Activated CD8-positive, alpha-beta T cell treated with anti-CD3 and anti-CD28 coated beads for 36 hours (primary cell): ENCODE measurements at regions of chr3 and their contacts with region 1.

Region 1: GRCh38 chr3:46488735-46489361 is 8.9 kb upstream of the RTP3 start:
- DNase-seq: peak; percentile 97
- ATAC-seq: peak; percentile 99
- H3K4me3 Mint-ChIP-seq: peak overlapping the region; percentile 26
- H3K27ac Mint-ChIP-seq: no peak overlapping the region
- H3K4me1 Mint-ChIP-seq: peaks cover 8% of the 10 kb centered on the region
- H3K27me3 Mint-ChIP-seq: no peaks in the 10 kb centered on the region
- CTCF ChIP-seq: peak; percentile 100

Region 2: DNA sequence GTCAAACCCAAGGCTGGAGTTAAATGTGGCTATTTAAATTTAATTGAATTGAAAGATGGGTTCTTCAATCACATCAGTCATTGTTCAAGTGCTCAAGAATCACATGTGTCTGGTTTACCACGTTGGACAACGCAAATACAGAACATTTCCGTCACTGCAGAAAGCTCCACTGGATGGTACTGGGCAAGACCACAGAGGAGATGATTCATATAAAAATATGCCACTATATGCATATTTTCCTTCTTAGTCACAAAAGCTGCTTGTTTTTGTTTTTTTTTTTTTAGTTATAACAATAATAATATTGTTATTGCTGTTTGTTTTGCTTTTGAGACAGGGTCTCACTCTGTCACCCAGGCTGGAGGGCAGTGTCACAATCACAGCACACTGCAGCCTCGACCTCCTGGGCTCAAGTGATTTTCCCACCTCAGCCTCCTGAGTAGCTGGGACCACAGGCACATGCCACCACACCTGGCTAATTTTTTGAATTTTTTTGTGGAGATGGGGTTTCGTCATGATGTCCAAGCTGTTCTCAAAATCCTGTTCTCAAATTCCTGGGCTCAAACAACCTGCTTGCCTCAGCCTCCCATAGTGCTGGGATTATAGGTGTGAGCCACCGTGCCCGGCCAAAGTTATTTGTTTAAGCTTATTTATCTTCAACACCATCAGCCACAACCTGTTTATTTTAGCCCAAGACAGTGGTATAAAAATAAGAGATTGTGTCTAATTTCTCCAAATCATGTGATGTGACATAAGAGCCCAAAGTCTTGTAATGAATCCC is 28.4 kb after region 1 on chr3:
- CTCF ChIA-PET with region 1: interaction called, 24 read pairs
- POLR2A ChIA-PET with region 1: no interaction called
- intact Hi-C with region 1: no loop called
- DNase-seq: no peak
- ATAC-seq: peak; percentile 58
- H3K4me3 Mint-ChIP-seq: no peak overlapping the region
- H3K27ac Mint-ChIP-seq: no peak overlapping the region
- H3K4me1 Mint-ChIP-seq: no peaks in the 10 kb centered on the region
- H3K27me3 Mint-ChIP-seq: no peaks in the 10 kb centered on the region
- CTCF ChIP-seq: no peak

Region 3: GRCh38 chr3:46558184-46559043 is 69.6 kb after region 1 on chr3:
- CTCF ChIA-PET with region 1: interaction called, 150 read pairs
- POLR2A ChIA-PET with region 1: interaction called, 4 read pairs
- intact Hi-C with region 1: loop called (anchors 5 kb)
- DNase-seq: peak; percentile 79
- ATAC-seq: peak; percentile 94
- H3K4me3 Mint-ChIP-seq: peak overlapping the region; percentile 63
- H3K27ac Mint-ChIP-seq: no peak overlapping the region
- H3K4me1 Mint-ChIP-seq: peaks cover 13% of the 10 kb centered on the region
- H3K27me3 Mint-ChIP-seq: peaks cover 2% of the 10 kb centered on the region
- CTCF ChIP-seq: peak; percentile 69

Region 4: DNA sequence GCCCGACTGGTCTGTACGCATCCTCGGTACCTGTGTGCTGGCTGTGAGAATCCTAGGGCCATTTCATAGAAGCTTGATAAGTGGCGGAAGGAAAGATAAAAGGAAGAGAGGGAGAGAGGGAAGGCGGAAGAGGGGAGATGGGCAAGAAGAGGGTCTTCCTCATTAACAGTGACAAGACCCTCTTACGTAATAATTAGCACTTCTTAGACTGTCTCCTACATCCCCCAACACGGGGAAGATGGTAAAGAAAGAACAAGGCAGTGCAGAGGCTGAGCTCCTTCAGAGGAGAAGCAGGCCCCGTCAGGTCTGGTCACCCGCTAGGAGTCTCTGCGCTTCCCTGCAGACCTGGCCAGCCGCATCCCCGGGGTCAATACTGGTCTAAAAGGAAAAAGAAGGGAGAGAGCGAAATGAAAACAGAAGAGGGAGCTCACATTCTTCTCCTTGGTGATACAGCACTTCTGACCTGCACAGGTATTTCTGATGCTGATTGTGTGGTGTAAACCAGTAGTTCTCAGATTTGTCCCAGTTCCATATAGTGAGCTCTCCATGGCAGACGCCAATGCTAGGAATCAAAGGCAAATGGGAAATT is 104.5 kb after region 1 on chr3:
- CTCF ChIA-PET with region 1: interaction called, 10 read pairs
- POLR2A ChIA-PET with region 1: no interaction called
- intact Hi-C with region 1: no loop called
- DNase-seq: no peak
- ATAC-seq: no peak
- H3K4me3 Mint-ChIP-seq: no peak overlapping the region
- H3K27ac Mint-ChIP-seq: no peak overlapping the region
- H3K4me1 Mint-ChIP-seq: peaks cover 2% of the 10 kb centered on the region
- H3K27me3 Mint-ChIP-seq: peaks cover 1% of the 10 kb centered on the region
- CTCF ChIP-seq: no peak

Region 5: GRCh38 chr3:46619845-46620778 is 131.3 kb after region 1 on chr3:
- CTCF ChIA-PET with region 1: interaction called, 254 read pairs
- POLR2A ChIA-PET with region 1: no interaction called
- intact Hi-C with region 1: no loop called
- DNase-seq: no peak
- ATAC-seq: no peak
- H3K4me3 Mint-ChIP-seq: no peak overlapping the region
- H3K27ac Mint-ChIP-seq: no peak overlapping the region
- H3K4me1 Mint-ChIP-seq: no peaks in the 10 kb centered on the region
- H3K27me3 Mint-ChIP-seq: peaks cover 12% of the 10 kb centered on the region
- CTCF ChIP-seq: no peak